AG04450 (cell line): ENCODE measurements at regions of chr1 and their contacts with region 1.

Region 1: GRCh38 chr1:43934101-43934985 is 742 bp downstream of the ARTN start:
- DNase-seq: no peak
- H3K4me3 ChIP-seq: no peak overlapping the region
- H3K27ac ChIP-seq: no peak overlapping the region
- H3K27me3 ChIP-seq: no peaks in the 10 kb centered on the region
- CTCF ChIP-seq: peak; percentile 90

Region 2: GRCh38 chr1:43529206-43529731 is 405.1 kb before region 1 on chr1:
- CTCF ChIA-PET with region 1: interaction called, 12 read pairs
- POLR2A ChIA-PET with region 1: no interaction called
- DNase-seq: peak; percentile 75
- H3K4me3 ChIP-seq: no peak overlapping the region
- H3K27ac ChIP-seq: no peak overlapping the region
- H3K27me3 ChIP-seq: no peaks in the 10 kb centered on the region
- CTCF ChIP-seq: peak; percentile 97

Region 3: DNA sequence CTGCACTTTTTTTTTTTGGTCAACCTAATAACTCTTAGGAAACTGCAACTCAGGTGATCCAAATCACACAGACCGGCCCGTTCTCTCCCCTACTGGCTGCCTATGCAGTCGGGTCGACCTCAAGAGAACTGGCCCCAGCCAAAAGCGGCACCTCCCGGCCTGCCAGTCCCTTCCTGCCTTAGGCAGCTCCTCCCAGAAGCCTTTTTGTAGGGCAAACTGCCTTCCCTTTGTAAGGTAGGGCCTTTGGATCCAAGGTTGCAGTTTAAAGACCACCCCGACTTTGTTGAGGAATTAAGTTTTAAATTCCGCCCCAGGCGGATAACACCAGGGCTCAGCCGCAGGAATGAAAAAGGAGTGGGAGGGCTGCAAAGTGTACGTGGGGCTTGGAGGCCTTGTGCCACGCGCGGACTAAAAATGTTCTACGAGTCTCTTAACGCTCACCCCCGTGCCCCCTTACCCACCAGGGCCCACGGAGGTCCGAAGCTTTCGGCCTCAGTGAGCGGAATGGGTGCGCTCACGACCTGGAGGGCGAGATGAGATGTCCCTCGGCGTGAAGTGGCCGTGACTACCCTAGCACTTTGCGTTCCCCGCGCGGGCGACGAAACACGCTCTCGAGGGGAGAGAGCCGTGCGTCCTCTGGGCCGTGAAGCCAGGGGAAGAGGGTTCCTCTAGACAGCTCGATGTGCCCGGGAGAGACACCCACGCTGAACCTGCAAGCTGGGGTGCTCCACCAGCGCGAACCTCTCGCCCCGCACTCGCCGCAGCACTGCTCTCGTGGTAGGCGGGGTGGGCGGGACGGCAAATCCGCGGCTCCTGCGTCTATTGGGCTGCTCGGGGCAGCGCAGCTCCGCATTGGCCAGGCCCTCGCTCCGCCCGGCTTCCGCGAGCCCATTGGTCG is 227.5 kb before region 1 on chr1:
- CTCF ChIA-PET with region 1: interaction called, 12 read pairs
- POLR2A ChIA-PET with region 1: no interaction called
- DNase-seq: peak; percentile 73
- H3K4me3 ChIP-seq: peak overlapping the region; percentile 87
- H3K27ac ChIP-seq: peak overlapping the region; percentile 43
- H3K27me3 ChIP-seq: no peaks in the 10 kb centered on the region
- CTCF ChIP-seq: no peak

Region 4: GRCh38 chr1:43763497-43763973 is 170.8 kb before region 1 on chr1:
- CTCF ChIA-PET with region 1: interaction called, 438 read pairs
- POLR2A ChIA-PET with region 1: interaction called, 21 read pairs
- DNase-seq: peak; percentile 86
- H3K4me3 ChIP-seq: no peak overlapping the region
- H3K27ac ChIP-seq: no peak overlapping the region
- H3K27me3 ChIP-seq: no peaks in the 10 kb centered on the region
- CTCF ChIP-seq: peak; percentile 93

Region 5: DNA sequence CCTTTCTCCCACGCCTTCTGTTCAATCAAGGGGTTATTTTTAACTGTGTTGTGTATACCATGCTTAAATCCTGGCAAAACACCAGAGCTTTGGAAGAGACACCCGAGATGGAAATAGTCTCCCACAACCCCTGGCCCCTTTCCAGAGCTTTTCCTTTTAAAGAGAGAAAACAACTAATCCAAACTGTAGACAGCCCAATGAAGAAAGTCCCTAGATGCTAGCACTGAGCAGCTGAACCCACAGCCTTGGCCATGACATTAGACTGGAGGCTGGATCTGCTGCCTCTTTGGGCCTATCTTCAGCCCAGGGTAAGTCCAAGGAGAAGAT is 65.6 kb before region 1 on chr1:
- CTCF ChIA-PET with region 1: interaction called, 10 read pairs
- POLR2A ChIA-PET with region 1: no interaction called
- DNase-seq: peak; percentile 66
- H3K4me3 ChIP-seq: no peak overlapping the region
- H3K27ac ChIP-seq: peak overlapping the region; percentile 1
- H3K27me3 ChIP-seq: no peaks in the 10 kb centered on the region
- CTCF ChIP-seq: no peak

Region 6: DNA sequence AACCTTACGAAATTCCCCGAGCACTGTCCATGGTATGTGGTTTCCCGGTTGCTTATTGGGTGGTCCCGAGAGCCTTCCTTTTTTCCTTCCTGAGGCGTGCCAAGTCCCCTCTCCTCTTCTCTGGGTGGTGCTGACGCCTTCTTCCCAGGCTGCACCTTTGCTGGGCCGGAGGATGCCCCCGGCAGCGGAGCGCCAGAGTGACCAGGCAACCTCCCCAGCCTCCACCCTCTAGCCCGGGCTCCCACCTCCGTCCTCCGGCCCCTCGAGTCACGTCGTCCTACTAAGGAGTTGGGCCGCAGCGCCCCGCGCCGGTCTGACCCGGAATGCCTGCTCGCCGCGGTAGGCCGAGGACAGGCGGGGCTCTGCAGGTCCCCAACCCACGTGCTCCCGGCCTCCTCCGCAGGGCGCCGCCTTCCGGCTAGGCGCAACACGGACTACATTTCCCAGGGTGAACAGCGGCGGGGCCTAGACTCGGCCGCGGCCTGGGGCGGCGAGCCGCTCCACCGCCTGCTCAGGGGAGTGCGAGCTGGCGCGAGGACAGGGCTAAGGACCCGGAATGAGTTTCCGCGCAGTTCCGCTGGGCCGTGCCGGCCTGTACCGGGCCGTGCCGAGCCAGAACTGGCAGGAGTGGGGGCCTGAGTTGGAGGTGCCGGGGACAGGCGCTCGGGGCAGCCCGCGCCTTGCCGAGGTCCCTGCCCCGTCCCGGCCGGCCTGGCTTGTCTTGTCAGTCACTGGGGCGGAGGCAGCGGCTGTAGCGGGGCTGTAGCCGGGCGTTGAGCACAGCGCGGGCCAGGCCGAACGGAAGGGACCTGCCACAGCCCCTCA is 12.1 kb after region 1 on chr1 and contains the start of gene IPO13:
- CTCF ChIA-PET with region 1: interaction called, 80 read pairs
- POLR2A ChIA-PET with region 1: interaction called, 5 read pairs
- DNase-seq: peak; percentile 84
- H3K4me3 ChIP-seq: peak within 1 kb of the TSS; percentile 91
- H3K27ac ChIP-seq: peak within 1 kb of the TSS; percentile 82
- H3K27me3 ChIP-seq: no peaks in the 10 kb centered on the region
- CTCF ChIP-seq: peak; percentile 46
- polyA plus RNA-seq, gene IPO13: 11.2 and 16.1 TPM in 2 replicates

Region 7: DNA sequence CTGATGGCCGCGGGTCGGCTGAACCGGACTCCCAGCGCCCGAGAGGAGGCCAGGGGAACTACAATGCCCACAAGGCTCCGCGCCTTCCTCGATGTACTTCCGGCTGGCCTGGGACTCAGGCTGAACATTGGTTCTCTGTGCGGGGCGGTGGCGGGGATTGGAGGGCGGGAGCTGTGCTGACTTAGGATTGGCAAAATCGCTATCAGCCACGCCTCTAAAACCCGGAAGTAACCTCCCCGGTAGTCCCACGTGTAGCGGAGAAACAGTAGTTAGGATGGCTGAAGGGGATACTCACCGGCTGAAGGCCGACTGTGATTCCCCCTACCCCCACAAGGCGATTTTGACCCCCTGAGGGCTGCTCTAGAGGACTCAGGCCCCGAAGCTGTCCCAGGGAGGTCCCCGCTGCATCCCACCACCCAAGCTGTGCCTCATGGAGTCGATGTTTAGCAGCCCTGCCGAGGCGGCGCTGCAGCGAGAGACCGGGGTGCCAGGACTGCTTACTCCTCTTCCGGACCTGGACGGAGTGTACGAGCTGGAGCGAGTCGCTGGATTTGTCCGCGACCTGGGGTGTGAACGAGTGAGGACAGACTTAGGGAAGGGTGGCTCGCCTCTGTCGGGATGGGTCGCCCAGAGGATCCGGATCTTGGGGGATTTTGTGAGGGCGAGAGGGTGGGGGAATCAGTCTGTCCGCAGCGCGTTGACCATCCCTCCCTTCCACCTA is 35.6 kb after region 1 on chr1 and contains the start of gene DPH2:
- CTCF ChIA-PET with region 1: interaction called, 12 read pairs
- POLR2A ChIA-PET with region 1: no interaction called
- DNase-seq: peak; percentile 91
- H3K4me3 ChIP-seq: peak within 1 kb of the TSS; percentile 94
- H3K27ac ChIP-seq: no peak within 1 kb of the TSS
- H3K27me3 ChIP-seq: no peaks in the 10 kb centered on the region
- CTCF ChIP-seq: no peak; the same call in 1 of the 2 replicates
- polyA plus RNA-seq, gene DPH2: 17.9 and 22.2 TPM in 2 replicates

Region 8: DNA sequence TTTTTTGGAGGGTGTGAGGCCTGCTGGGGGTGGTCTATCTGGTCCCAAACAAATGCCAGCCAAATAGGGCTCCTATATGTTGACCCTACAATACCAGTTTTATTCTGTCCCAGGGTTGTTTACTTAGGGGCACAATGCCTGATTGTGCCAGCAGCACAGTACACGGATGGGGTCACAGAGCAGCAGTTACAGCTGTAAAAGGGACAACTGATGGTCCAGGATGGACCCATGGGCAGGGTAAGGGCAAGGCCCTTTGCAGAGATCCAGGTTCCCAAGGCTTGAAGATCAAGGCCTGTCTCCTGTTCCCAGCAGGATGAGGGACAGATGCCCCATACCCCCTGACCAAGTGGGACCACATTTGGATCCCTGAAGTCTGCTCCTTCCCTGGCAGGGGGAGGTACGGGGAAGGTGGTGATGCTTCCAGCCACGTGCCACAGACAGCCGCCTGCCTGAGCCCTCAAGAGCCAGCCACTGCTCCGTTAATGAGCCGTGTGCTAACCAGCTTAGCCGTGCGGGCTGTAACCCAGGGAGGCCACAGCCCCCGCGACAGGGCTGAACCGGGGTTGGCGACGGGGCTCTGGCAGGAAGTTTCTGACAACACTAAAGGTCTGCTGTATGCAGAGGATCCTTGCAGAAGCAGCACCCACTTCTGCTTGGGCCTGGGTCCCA is 78.7 kb after region 1 on chr1:
- CTCF ChIA-PET with region 1: no interaction called
- POLR2A ChIA-PET with region 1: no interaction called
- DNase-seq: no peak
- H3K4me3 ChIP-seq: no peak overlapping the region
- H3K27ac ChIP-seq: no peak overlapping the region
- H3K27me3 ChIP-seq: no peaks in the 10 kb centered on the region
- CTCF ChIP-seq: no peak